ENCODE measurements at regions of chr14 and their contacts with region 1.

Region 1: GRCh38 chr14:57362361-57362760 is 28.0 kb upstream of the NAA30 start:
- DNase-seq: peak; percentile 21 to 47
- H3K4me3 ChIP-seq: no peak overlapping the region
- H3K4me3 Mint-ChIP-seq: no peak overlapping the region
- H3K27ac Mint-ChIP-seq: peak overlapping the region; percentile 91
- H3K4me1 ChIP-seq: peaks cover 28% of the 10 kb centered on the region
- H3K4me1 Mint-ChIP-seq: peaks cover 10% of the 10 kb centered on the region
- H3K27me3 ChIP-seq: no peaks in the 10 kb centered on the region
- H3K27me3 Mint-ChIP-seq: no peaks in the 10 kb centered on the region
- CTCF ChIP-seq: no peak

Region 2: GRCh38 chr14:56482310-56482911 is 880.0 kb before region 1 on chr14:
- CTCF ChIA-PET with region 1: no interaction called
- POLR2A ChIA-PET with region 1: no interaction called
- intact Hi-C with region 1: no loop called
- DNase-seq: peak in 1 of 2 experiments; percentile 25
- H3K4me3 ChIP-seq: no peak overlapping the region
- H3K4me3 Mint-ChIP-seq: no peak overlapping the region
- H3K27ac Mint-ChIP-seq: no peak overlapping the region
- H3K4me1 ChIP-seq: no peaks in the 10 kb centered on the region
- H3K4me1 Mint-ChIP-seq: no peaks in the 10 kb centered on the region
- H3K27me3 ChIP-seq: no peaks in the 10 kb centered on the region
- H3K27me3 Mint-ChIP-seq: peaks cover 10% of the 10 kb centered on the region
- CTCF ChIP-seq: no peak

Region 3: GRCh38 chr14:57390028-57390805 is 27.9 kb after region 1 on chr14 and contains the start of gene NAA30:
- CTCF ChIA-PET with region 1: no interaction called
- POLR2A ChIA-PET with region 1: no interaction called
- intact Hi-C with region 1: loop called (anchors 2 kb)
- DNase-seq: peak; percentile 96 to 99
- H3K4me3 ChIP-seq: peak within 1 kb of the TSS; percentile 94
- H3K4me3 Mint-ChIP-seq: peak within 1 kb of the TSS; percentile 80
- H3K27ac Mint-ChIP-seq: peak within 1 kb of the TSS; percentile 81
- H3K4me1 ChIP-seq: peaks cover 13% of the 10 kb centered on the region
- H3K4me1 Mint-ChIP-seq: peaks cover 7% of the 10 kb centered on the region
- H3K27me3 ChIP-seq: no peaks in the 10 kb centered on the region
- H3K27me3 Mint-ChIP-seq: no peaks in the 10 kb centered on the region
- CTCF ChIP-seq: no peak
- total RNA-seq, gene NAA30: 21.0 and 23.7 TPM in 2 replicates

Measured in Caco-2 (cell line).